Head of caudate nucleus (tissue), 42 donors: ENCODE measurements at regions of chr15 and their contacts with region 1.

Region 1: DNA sequence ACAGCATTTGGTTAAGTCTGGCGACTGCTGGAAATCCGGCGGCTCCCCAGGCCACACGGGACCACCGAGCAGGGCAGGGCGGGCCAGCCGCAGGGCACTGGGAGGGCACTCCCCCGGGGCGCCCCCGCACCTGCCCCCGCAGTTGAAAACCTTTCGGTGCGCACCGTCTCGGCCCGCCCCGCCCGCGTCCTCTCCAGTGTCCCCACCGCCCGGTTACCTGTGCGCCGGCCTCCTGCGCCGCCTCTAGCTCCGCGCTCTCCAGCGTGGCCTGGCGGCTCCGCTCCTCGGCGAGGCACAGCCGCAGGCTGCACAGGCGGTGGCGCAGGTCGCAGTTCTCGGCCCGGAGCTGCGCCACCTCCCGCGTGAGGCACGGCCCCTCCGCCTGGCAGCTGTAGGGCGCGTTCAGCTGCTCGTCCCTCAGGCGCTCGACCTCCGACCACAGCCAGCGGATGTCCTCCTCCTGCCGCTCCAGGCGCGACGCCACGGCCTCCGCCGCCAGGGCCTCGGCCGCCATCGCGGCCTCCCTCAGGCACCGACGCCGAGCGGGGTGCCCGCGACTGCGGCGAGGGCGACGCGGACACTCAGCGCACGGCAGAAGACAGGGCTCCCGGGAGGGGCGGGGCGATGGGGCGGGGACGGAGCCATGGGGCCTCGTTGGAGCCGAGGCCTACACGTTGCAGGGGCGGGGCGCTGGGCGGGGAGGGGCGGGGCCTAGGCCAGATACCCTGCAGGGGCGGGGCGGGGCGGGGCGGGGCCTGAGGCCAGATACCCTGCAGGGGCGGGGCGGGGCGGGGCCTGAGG is at the start of gene TARS3:
- DNase-seq: peak; percentile 89 to 98 (median 96)

Region 2: GRCh38 chr15:101501703-101502373 is 222.2 kb before region 1 on chr15:
- intact Hi-C with region 1: no loop called
- DNase-seq: peak in 41 of 42 donors; percentile 55 to 89 (median 71)

Region 3: GRCh38 chr15:101652098-101652782 is 71.8 kb before region 1 on chr15 and contains the start of gene TM2D3:
- intact Hi-C with region 1: loop called (anchors 5 kb)
- DNase-seq: peak; percentile 74 to 97 (median 92)

Region 4: GRCh38 chr15:101852356-101852755 is 128.3 kb after region 1 on chr15:
- intact Hi-C with region 1: no loop called
- DNase-seq: no peak